Left cardiac atrium (tissue), 4 donors: ENCODE measurements at regions of chr17 and their contacts with region 1.

Region 1: GRCh38 chr17:49694847-49695683 is 12.7 kb downstream of the SLC35B1 start:
- DNase-seq: no peak
- ATAC-seq: no peak

Region 2: GRCh38 chr17:49567871-49568694 is 127.0 kb before region 1 on chr17:
- intact Hi-C with region 1: loop called (anchors 2 kb)
- DNase-seq: peak; percentile 91
- ATAC-seq: peak; percentile 81 to 84

Region 3: DNA sequence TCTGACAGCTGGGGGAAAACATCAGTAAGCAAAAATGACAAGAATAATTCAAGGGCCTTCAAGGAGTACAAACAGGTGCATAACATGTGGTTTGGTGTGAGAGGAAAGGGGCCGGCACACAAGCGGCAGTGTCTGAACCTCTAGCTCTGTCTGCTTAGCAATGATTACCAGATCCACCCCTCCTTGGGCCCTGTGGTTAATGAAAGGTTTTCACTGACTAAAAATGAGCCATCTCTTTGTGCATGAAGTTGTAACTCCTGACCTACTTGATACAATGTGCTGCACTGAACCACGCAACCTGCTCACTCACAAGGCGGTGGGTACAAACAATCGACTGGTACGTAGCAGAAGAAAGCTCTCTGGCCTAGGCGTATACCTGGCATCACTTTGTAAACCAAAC is 53.7 kb after region 1 on chr17:
- intact Hi-C with region 1: no loop called
- DNase-seq: no peak
- ATAC-seq: peak in 1 of 2 donors; percentile 56

Region 4: DNA sequence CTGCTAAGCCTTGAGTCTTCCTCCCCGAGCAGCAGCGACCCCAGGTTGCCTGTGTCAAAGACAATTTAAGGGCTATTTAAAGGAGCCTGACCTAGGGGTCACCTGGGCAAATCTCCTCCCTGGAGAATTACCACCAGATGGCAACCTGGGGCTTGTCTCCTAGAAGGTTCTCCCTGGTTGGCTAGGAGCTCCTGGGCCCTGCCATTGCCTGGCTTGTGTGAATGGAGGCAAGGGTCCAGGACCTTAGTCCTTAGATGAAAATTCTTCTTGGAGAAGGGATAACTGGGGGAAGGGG is 204.1 kb after region 1 on chr17:
- intact Hi-C with region 1: no loop called
- DNase-seq: no peak
- ATAC-seq: no peak

Region 5: DNA sequence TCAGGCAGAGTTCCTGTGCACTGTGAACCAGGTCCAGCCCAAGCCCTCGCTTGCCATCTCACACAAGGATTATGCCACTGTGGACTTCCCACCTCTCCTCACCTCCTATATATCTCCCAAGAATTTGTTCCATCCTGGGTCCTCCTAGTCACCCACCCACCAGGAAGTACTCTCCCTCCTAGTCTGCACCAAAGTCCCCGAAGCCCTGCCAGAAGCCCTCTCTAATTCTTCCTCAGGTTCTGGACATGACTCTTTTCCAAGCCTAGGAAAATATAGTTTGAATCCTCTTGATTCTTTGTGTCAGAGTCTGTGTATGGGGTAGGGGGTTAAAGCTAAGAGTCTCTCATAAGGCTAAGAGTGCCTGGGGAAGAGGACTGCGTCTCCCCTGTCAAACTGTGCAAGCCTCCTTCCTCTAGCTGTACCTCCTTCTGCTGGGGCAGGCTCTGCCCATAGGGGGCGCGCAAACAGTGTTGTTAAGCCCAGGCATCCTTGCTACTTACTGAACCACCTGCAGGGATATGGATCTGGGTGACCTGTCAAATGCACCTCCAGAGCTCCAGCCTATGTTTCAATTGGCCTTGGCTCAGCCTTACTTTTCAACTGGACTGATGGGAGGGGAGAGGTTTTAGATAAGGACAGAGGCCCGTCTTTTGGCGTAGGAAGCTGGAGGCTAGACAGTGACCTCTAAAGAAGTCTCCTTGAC is 257.3 kb after region 1 on chr17:
- intact Hi-C with region 1: no loop called
- DNase-seq: peak; percentile 78
- ATAC-seq: peak; percentile 72 to 90